Activated T-helper 2 cell treated with anti-CD3 and anti-CD28 coated beads, Interferon-gamma antibody, Interleukin-2, Interleukin-4, amounts not matched to agents 10 μg/mL and 5 μg/mL and 100 μg/mL, durations not matched to agents 14 hours and 24 hours and 36 hours (primary cell): ENCODE measurements at regions of chr5 and their contacts with region 1.

Region 1: DNA sequence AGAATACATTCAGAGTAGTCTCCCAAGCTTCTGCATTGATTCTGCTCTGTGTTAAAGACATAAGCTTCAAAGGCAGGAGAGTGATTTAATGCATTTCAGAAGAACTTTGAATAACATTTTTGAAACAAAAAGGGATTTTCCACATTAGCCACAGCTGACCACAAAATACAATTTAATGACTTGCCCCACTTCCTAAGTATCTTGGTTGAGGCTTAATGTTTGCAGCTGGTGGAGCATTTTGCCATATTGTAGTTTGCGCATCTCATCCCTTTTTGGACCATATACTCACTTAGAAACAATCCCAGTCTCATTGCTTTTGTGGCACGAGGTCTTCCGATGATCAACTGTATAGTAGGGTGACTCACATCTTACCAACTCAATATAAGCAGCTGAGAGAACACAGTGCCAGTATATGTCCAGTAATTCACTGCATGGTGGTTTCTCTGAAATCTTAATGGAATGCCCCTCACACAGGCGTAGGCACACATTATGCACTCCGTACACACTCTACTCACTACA is 455.8 kb upstream of the PTGER4 start:
- DNase-seq: peak; percentile 43
- H3K4me3 Mint-ChIP-seq: peak overlapping the region; percentile 54
- H3K27ac Mint-ChIP-seq: peak overlapping the region; percentile 94
- H3K4me1 Mint-ChIP-seq: peaks cover 51% of the 10 kb centered on the region
- H3K27me3 Mint-ChIP-seq: no peaks in the 10 kb centered on the region

Region 2: GRCh38 chr5:39177631-39177964 is 1046.3 kb before region 1 on chr5:
- intact Hi-C with region 1: loop called (anchors 10 kb)
- DNase-seq: no peak
- H3K4me3 Mint-ChIP-seq: peak overlapping the region; percentile 69
- H3K27ac Mint-ChIP-seq: peak overlapping the region; percentile 84
- H3K4me1 Mint-ChIP-seq: peaks cover 85% of the 10 kb centered on the region
- H3K27me3 Mint-ChIP-seq: no peaks in the 10 kb centered on the region

Region 3: GRCh38 chr5:40165794-40166728 is 57.9 kb before region 1 on chr5:
- intact Hi-C with region 1: no loop called
- DNase-seq: no peak
- H3K4me3 Mint-ChIP-seq: no peak overlapping the region
- H3K27ac Mint-ChIP-seq: no peak overlapping the region
- H3K4me1 Mint-ChIP-seq: peaks cover 10% of the 10 kb centered on the region
- H3K27me3 Mint-ChIP-seq: no peaks in the 10 kb centered on the region

Region 4: DNA sequence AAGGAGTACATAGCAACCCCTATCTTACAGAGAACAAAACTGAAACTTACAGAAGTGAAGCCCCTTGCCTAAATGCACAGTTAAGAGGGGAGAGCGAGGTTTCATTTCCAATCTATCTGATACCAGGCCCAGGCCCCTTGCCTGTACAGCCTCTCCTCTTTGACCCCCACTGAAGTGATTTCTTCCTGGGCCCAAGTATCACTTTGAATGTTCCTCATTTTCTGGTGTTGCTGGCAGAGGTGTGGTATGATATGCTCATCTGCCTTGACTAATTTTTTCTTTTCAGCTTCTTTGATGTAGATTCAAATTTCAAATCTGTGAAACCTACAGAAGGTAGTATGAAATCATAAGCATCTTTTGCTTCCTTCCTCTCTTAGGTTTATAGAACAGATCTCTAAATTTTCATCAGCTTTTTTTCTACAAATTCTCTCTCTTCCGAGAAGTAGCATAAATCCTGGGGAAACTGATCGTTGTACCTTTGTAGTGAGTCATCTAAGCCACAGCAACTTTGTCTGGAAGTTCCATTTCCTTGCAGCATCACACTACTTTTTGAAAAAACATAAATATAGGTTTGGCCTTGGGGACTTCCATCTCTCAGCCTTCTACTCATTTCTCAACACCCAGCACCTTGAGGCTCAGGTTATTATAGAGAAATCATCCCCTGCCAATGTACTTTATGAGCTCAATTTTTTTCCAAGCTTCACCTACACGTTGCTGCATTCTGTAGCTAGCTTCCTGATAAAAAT is 53.4 kb after region 1 on chr5:
- intact Hi-C with region 1: loop called (anchors 1 kb)
- DNase-seq: peak; percentile 22
- H3K4me3 Mint-ChIP-seq: peak overlapping the region; percentile 5
- H3K27ac Mint-ChIP-seq: peak overlapping the region; percentile 87
- H3K4me1 Mint-ChIP-seq: peaks cover 53% of the 10 kb centered on the region
- H3K27me3 Mint-ChIP-seq: no peaks in the 10 kb centered on the region

Region 5: GRCh38 chr5:40404613-40405012 is 180.7 kb after region 1 on chr5:
- intact Hi-C with region 1: loop called (anchors 1 kb)
- DNase-seq: no peak
- H3K4me3 Mint-ChIP-seq: peak overlapping the region; percentile 37
- H3K27ac Mint-ChIP-seq: peak overlapping the region; percentile 84
- H3K4me1 Mint-ChIP-seq: peaks cover 77% of the 10 kb centered on the region
- H3K27me3 Mint-ChIP-seq: no peaks in the 10 kb centered on the region

Region 6: GRCh38 chr5:40486437-40487275 is 262.7 kb after region 1 on chr5:
- intact Hi-C with region 1: loop called (anchors 1 kb)
- DNase-seq: peak; percentile 64
- H3K4me3 Mint-ChIP-seq: peak overlapping the region; percentile 19
- H3K27ac Mint-ChIP-seq: peak overlapping the region; percentile 75
- H3K4me1 Mint-ChIP-seq: peaks cover 78% of the 10 kb centered on the region
- H3K27me3 Mint-ChIP-seq: no peaks in the 10 kb centered on the region

Region 7: DNA sequence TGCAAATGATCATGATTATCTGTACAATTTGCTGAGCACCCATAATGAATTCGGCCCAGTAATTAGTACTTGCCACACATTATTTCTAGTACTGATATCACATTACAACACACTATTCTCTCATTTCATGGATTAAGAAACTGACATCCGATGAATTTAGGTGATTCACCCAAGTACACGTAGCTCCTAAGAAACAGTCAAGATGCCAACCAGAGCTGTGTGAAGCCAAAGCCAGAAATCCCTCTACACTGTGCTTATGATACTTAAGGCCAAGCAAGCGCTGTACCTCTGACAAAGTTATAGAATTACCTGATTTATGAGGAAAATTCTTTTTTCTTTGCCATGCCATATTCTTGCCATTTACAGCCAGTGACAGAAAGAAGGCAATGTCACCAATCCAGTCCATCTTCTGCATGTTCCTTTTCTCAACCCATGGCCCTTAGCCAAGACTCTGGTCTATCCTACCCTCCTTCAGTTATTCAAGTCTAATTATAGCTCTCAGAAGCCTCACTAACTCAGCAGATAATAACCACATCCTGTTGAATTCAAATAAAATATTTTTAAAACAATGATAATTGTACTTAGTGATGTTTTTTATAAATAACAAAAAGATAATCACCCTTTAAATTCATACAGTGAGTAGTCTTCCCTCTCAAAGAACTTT is 381.5 kb after region 1 on chr5:
- intact Hi-C with region 1: no loop called
- DNase-seq: no peak
- H3K4me3 Mint-ChIP-seq: no peak overlapping the region
- H3K27ac Mint-ChIP-seq: no peak overlapping the region
- H3K4me1 Mint-ChIP-seq: peaks cover 32% of the 10 kb centered on the region
- H3K27me3 Mint-ChIP-seq: no peaks in the 10 kb centered on the region

Region 8: DNA sequence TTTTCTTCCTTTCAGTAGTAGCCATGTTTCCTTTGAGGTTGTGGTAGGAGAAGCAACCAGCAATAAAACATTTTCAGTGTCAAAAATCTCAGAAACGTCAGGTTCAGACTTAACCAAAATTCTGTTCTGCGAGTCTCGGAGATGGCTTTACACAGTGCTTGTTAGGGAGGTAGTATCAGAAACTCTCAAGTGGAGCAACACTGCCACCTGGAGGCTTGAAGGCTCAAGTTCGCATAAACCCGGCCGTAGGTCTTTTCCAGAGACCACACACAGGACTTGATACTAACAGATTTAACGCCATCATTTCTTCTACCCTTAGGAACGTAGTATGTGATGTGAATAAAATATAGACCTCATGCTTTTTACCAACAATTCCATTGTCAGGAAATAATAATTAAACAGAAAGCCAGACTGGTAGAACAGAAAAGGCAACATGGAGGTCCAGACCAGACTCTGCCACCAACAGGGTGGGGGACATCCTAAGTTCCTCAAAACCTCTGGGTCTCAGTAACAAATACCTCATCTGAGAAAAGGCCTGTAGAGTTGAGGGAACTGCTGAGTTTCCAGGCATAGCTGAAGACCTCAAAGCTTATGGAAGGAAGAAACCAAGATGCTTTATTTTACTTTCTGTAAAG is 464.3 kb after region 1 on chr5:
- intact Hi-C with region 1: loop called (anchors 1 kb)
- DNase-seq: peak; percentile 76
- H3K4me3 Mint-ChIP-seq: peak overlapping the region; percentile 76
- H3K27ac Mint-ChIP-seq: peak overlapping the region; percentile 73
- H3K4me1 Mint-ChIP-seq: peaks cover 70% of the 10 kb centered on the region
- H3K27me3 Mint-ChIP-seq: no peaks in the 10 kb centered on the region